Posterior vena cava (tissue), 2 donors: ENCODE measurements at regions of chr4 and their contacts with region 1.

Region 1: DNA sequence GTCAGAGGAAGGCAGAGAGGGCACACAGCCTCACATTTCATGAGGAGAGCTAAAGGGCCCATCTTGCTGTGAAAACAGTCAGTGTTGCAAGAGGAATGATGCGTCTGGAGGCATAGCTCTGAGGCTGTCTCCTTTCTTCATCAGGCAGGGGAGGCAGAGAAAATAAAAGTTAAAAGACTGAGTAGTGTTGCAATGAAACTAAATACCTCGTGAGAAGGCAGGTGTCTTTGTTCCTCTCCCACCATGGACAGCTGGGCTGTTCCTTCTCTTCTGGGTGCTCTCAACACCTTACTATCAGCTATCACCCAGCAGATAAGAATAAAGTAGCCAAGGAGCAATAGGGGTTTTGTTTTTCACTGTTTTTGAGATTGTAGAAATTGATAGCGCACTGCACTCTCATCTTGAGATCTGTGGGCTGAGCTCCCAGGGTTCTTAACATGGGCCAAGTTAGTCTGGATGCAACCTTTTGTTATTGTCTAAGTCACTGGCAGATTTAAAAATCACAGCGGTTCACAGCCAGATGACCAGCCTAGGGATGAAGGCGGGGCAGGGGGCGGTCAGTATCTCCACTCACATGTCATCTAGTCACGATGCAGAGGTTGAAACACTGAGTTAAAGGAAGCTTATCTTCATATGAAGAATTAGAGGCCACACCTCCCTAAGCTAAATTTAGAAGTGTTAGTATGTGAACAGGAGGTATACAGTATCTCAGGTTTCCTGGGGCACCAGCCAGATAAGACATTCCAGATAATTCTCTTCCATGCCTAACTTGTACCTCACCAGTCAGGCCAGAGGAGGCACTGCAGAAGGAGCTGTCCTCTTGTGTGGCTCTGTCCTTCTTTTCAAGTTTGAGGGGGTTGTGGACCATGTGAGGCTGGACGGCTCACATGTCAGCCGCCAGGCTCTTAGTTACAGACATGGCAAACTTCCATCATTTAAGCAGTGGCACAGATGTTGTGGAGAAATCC is 36.9 kb downstream of the PARM1 start:
- DNase-seq: no peak

Region 2: DNA sequence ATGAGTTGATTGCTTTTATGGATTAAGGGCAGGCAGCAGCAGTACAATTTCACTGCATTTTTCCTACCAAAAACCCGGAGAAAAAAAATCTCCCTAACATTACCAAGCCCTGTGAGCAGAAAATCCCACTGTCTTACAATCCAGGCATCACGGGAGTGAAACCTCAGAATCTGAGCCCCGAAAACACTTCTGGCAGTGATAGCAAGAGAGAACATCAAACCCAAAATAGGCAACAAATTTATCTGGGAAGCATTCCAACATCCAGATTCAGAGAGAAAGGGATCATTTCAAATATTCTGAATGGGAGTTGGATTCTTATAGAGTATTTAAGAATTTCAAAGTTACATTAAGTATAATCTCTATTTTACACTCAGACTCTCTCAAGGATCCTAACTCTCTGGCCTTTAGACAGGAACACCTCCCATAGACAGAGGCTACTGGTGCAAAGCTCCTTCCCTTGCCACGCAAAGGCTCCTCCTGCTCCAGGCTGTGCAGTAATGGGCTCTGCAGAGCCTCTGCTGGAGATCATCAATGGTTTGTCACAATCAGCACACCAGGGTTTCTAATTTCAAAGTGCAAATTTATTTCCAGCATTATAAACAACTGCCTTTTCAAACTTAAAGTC is 220.0 kb after region 1 on chr4:
- intact Hi-C with region 1: loop called in 1 of 2 experiments (anchors 10 kb)
- DNase-seq: no peak

Region 3: DNA sequence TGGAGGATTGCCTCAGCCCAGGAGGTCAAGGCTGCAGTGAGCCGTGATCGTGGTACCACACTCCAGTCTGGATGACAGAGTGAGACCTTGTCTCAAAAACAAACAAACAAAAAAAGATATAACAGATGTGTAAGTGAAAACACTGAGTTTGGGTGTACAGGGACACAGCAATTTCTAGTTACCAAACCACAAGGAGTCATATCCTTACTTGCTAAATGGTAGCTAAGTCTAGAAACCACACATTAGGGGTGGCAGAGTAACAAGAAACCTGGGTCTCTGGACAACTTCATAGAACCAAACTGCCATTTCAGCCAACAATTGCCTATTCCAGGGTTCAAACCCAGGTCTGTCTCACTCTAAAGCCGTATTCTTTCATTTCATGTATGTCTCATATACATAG is 911.7 kb after region 1 on chr4:
- intact Hi-C with region 1: no loop called
- DNase-seq: no peak